ENCODE measurements at regions of chr16 and their contacts with region 1.

Region 1: GRCh38 chr16:80526425-80527061 is 14.2 kb upstream of the DYNLRB2 start:
- DNase-seq: peak; percentile 69
- ATAC-seq: peak; percentile 69
- H3K4me3 Mint-ChIP-seq: no peak overlapping the region
- H3K27ac Mint-ChIP-seq: no peak overlapping the region
- H3K4me1 Mint-ChIP-seq: peaks cover 15% of the 10 kb centered on the region
- H3K27me3 Mint-ChIP-seq: peaks cover 10% of the 10 kb centered on the region

Region 2: DNA sequence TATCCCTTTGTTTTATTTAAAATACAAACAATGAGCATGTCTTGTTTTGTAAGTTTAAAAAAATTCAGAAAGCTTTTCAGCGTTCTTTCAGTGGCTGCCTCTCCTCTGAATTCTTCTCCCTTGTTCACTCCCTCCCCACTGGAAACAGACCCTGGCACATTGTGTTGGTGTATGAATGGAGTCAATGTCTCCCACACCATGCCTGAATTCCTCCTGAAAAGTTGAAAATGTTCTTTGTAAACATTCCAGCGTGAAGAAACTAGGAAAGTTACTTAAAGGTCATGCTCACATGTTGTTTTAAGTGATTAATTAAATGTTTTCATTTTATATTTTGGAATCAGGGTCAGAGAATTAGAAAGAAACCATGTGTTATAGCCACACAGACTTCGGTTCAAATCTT is 122.6 kb before region 1 on chr16:
- CTCF ChIA-PET with region 1: no interaction called
- DNase-seq: no peak
- ATAC-seq: no peak
- H3K4me3 Mint-ChIP-seq: no peak overlapping the region
- H3K27ac Mint-ChIP-seq: no peak overlapping the region
- H3K4me1 Mint-ChIP-seq: no peaks in the 10 kb centered on the region
- H3K27me3 Mint-ChIP-seq: peaks cover 44% of the 10 kb centered on the region

Region 3: DNA sequence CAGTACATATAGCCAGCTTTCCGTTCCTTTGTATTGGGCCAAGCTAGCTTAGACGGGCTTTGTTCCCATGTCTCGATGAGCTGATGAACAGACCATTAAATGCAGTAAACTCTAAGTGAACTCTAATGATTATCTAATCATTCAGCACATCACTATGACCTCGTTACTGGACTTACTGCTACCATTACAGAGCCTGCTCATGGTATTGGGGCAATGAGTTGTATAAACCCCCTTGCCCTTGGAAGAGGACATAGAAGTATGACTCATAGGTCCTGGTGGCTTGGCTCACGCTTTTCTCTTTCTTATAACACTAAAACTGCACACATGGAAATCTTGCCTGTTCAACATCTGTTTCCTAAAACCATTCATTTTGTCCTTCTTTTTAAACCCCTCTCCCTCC is 79.3 kb before region 1 on chr16:
- CTCF ChIA-PET with region 1: no interaction called
- DNase-seq: no peak
- ATAC-seq: no peak
- H3K4me3 Mint-ChIP-seq: no peak overlapping the region
- H3K27ac Mint-ChIP-seq: no peak overlapping the region
- H3K4me1 Mint-ChIP-seq: no peaks in the 10 kb centered on the region
- H3K27me3 Mint-ChIP-seq: peaks cover 10% of the 10 kb centered on the region

Region 4: GRCh38 chr16:80466024-80466987 is 60.2 kb before region 1 on chr16:
- CTCF ChIA-PET with region 1: interaction called, 13 read pairs
- DNase-seq: peak; percentile 74
- ATAC-seq: peak; percentile 80
- H3K4me3 Mint-ChIP-seq: no peak overlapping the region
- H3K27ac Mint-ChIP-seq: no peak overlapping the region
- H3K4me1 Mint-ChIP-seq: no peaks in the 10 kb centered on the region
- H3K27me3 Mint-ChIP-seq: peaks cover 27% of the 10 kb centered on the region

Region 5: GRCh38 chr16:80564394-80564793 is 37.9 kb after region 1 on chr16:
- CTCF ChIA-PET with region 1: interaction called, 13 read pairs
- DNase-seq: no peak
- ATAC-seq: no peak
- H3K4me3 Mint-ChIP-seq: no peak overlapping the region
- H3K27ac Mint-ChIP-seq: peak overlapping the region; percentile 80
- H3K4me1 Mint-ChIP-seq: peaks cover 51% of the 10 kb centered on the region
- H3K27me3 Mint-ChIP-seq: no peaks in the 10 kb centered on the region

Region 6: DNA sequence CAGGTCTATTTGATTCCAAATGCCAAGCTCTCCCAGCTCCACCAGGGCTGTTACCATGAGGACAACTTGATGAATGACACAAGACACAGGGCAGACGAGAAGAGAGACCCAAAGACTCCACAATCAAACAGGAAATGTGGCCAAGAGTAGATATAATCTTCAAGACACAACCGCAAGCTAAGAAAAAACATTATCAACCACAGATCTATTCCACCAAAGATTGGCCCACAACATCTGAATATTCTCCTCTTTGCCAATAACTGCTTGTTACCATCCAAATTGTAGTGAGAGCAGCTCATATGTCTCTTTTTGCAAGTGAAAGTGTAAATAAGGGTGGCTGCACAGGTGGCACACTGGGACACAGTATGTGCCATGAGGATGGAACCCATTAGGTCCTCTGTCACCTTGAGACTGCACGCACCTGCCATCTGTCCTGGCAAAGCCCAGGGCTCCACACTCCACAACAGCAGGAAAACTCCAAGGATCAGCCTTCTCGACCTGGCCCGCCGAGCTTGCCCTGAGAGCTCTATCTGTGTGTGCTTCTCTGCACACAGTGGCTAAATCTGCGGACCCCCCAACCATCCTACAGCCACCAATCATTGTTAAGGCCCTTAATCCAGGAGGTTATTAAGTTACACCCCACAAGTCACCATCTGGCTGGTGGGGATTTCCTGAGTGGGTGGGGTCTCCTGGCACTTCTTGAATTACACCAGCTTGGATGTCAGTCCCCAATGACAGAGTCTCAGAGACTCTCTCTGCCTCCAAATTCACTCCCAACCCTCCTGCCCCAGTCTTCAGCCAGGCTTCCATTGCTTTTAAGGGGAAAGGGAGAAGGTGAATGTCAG is 64.8 kb after region 1 on chr16:
- CTCF ChIA-PET with region 1: interaction called, 35 read pairs
- DNase-seq: peak; percentile 73
- ATAC-seq: peak; percentile 89
- H3K4me3 Mint-ChIP-seq: peak overlapping the region; percentile 26
- H3K27ac Mint-ChIP-seq: peak overlapping the region; percentile 76
- H3K4me1 Mint-ChIP-seq: peaks cover 45% of the 10 kb centered on the region
- H3K27me3 Mint-ChIP-seq: peaks cover 7% of the 10 kb centered on the region

Region 7: GRCh38 chr16:80656711-80657150 is 130.2 kb after region 1 on chr16:
- CTCF ChIA-PET with region 1: interaction called, 16 read pairs
- DNase-seq: peak; percentile 74
- ATAC-seq: peak; percentile 86
- H3K4me3 Mint-ChIP-seq: peak overlapping the region; percentile 80
- H3K27ac Mint-ChIP-seq: peak overlapping the region; percentile 99
- H3K4me1 Mint-ChIP-seq: peaks cover 52% of the 10 kb centered on the region
- H3K27me3 Mint-ChIP-seq: no peaks in the 10 kb centered on the region

Region 8: DNA sequence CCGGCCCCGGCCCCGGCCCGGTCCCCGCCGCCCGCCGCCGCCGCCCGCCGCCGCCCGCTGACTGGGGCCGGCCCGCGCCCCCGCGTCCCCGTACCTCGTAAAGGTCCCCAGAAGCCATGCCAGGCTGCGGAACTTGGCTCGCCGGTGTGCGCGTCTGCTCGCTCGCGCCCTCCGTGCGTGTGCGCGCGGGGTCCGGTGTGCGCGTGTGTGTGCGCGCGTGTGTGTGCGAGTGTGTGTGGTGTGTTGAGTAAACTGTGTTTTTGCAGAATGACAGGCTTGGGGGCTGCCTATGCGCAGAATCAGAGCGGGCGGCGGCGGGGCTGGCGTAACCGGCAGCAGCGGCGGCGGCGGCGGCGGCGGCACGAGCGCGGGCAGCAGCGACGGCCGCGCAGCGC is 277.5 kb after region 1 on chr16:
- CTCF ChIA-PET with region 1: interaction called, 18 read pairs
- DNase-seq: peak; percentile 69
- ATAC-seq: peak; percentile 35
- H3K4me3 Mint-ChIP-seq: peak overlapping the region; percentile 97
- H3K27ac Mint-ChIP-seq: peak overlapping the region; percentile 97
- H3K4me1 Mint-ChIP-seq: peaks cover 55% of the 10 kb centered on the region
- H3K27me3 Mint-ChIP-seq: no peaks in the 10 kb centered on the region

Region 9: GRCh38 chr16:80824718-80825364 is 298.3 kb after region 1 on chr16:
- CTCF ChIA-PET with region 1: interaction called, 117 read pairs
- DNase-seq: peak; percentile 63
- ATAC-seq: no peak
- H3K4me3 Mint-ChIP-seq: no peak overlapping the region
- H3K27ac Mint-ChIP-seq: no peak overlapping the region
- H3K4me1 Mint-ChIP-seq: peaks cover 2% of the 10 kb centered on the region
- H3K27me3 Mint-ChIP-seq: peaks cover 19% of the 10 kb centered on the region

Measured in activated CD8-positive, alpha-beta memory T cell treated with anti-CD3 and anti-CD28 coated beads, Interleukin-2, amount 10 ng/mL, durations not matched to agents 7 days and 5 days (primary cell).